PC-3 (cell line): ENCODE measurements at regions of chr1 and their contacts with region 1.

Region 1: DNA sequence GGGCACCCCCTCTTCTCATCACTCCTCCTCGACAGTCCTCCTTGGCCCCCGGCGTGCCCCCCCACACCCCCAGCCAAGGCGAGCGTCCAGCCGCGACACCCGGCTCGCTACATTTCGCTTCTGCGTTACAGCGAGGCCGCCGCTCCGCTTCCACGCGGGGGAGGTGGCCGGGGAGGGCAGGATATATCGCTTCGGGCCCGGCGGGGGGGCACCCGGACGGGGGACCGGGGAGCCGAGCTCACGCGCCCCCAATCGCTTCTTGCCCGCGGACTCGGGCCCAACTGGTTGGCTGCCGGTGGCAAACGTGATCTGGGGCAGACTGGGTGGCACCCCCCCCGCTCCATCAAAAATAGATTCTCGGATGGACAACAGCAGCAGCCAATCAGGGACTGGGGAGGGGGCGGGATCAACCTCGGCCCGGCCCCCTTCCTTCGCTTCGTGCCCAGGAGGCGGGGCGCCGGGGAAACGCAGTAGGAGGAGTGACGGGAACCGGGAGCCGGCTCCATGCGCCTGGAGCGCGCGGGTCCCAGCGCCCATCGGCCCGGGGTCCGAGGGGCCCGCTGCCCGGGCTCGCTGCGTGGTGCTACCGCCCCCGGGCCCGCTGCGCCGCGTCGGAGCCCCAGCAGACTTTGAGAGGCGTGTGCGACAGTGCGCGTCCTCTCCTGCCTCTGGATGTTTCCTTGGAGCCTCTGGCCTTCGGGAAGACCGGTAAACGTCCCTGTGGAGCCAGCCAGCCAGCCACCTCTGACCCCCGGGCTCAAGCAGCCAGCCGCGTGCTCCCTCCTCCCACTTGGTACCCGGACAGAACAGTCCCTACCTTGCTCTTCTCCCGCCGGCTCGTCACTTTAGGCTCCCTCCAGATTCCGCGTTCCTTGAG is at the start of gene SLC41A1:
- DNase-seq: peak; percentile 94
- ATAC-seq: peak; percentile 91
- H3K4me3 ChIP-seq: peak within 1 kb of the TSS; percentile 89
- H3K27ac ChIP-seq: no peak within 1 kb of the TSS
- H3K4me1 ChIP-seq: peaks cover 17% of the 10 kb centered on the region
- H3K27me3 ChIP-seq: no peaks in the 10 kb centered on the region
- CTCF ChIP-seq: no peak
- total RNA-seq, gene SLC41A1: 17.2 and 22.8 TPM in 2 replicates

Region 2: GRCh38 chr1:205750138-205751035 is 62.7 kb before region 1 on chr1 and contains the start of gene NUCKS1:
- CTCF ChIA-PET with region 1: no interaction called
- POLR2A ChIA-PET with region 1: no interaction called
- intact Hi-C with region 1: loop called (anchors 1 kb)
- DNase-seq: peak; percentile 99
- ATAC-seq: peak; percentile 78
- H3K4me3 ChIP-seq: peak within 1 kb of the TSS; percentile 86
- H3K27ac ChIP-seq: peak within 1 kb of the TSS; percentile 81
- H3K4me1 ChIP-seq: peaks cover 25% of the 10 kb centered on the region
- H3K27me3 ChIP-seq: no peaks in the 10 kb centered on the region
- CTCF ChIP-seq: no peak
- total RNA-seq, gene NUCKS1: 101 and 122 TPM in 2 replicates

Region 3: GRCh38 chr1:205791568-205792180 is 21.4 kb before region 1 on chr1:
- CTCF ChIA-PET with region 1: no interaction called
- POLR2A ChIA-PET with region 1: no interaction called
- intact Hi-C with region 1: loop called (anchors 1 kb)
- DNase-seq: peak; percentile 77
- ATAC-seq: peak; percentile 100
- H3K4me3 ChIP-seq: no peak overlapping the region
- H3K27ac ChIP-seq: no peak overlapping the region
- H3K4me1 ChIP-seq: no peaks in the 10 kb centered on the region
- H3K27me3 ChIP-seq: no peaks in the 10 kb centered on the region
- CTCF ChIP-seq: peak; percentile 93

Region 4: DNA sequence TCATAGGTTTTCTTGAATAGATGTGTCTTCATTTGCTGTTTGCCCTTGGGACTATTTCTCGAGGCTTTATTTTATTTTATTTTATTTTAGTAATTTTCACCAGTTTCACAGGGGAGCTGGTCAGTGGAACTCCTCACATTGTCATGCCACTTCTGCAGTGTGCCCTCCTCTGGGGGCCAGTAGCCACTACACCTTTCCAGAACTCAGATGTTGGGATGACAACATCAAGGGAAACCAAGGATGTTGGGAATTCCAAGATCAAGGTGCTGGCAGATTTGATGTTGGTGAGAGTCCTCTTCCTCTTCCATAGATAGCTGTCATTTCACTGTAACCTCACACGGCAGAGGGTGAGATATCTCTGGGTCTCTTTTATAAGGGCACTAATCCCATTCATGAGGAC is 94.7 kb after region 1 on chr1:
- CTCF ChIA-PET with region 1: interaction called, 5 read pairs
- POLR2A ChIA-PET with region 1: interaction called, 4 read pairs
- intact Hi-C with region 1: loop called (anchors 5 kb)
- DNase-seq: peak; percentile 74
- ATAC-seq: peak; percentile 96
- H3K4me3 ChIP-seq: no peak overlapping the region
- H3K27ac ChIP-seq: no peak overlapping the region
- H3K4me1 ChIP-seq: no peaks in the 10 kb centered on the region
- H3K27me3 ChIP-seq: peaks cover 18% of the 10 kb centered on the region
- CTCF ChIP-seq: peak; percentile 84